Aorta (tissue), 5 donors: ENCODE measurements at regions of chr18 and their contacts with region 1.

Region 1: DNA sequence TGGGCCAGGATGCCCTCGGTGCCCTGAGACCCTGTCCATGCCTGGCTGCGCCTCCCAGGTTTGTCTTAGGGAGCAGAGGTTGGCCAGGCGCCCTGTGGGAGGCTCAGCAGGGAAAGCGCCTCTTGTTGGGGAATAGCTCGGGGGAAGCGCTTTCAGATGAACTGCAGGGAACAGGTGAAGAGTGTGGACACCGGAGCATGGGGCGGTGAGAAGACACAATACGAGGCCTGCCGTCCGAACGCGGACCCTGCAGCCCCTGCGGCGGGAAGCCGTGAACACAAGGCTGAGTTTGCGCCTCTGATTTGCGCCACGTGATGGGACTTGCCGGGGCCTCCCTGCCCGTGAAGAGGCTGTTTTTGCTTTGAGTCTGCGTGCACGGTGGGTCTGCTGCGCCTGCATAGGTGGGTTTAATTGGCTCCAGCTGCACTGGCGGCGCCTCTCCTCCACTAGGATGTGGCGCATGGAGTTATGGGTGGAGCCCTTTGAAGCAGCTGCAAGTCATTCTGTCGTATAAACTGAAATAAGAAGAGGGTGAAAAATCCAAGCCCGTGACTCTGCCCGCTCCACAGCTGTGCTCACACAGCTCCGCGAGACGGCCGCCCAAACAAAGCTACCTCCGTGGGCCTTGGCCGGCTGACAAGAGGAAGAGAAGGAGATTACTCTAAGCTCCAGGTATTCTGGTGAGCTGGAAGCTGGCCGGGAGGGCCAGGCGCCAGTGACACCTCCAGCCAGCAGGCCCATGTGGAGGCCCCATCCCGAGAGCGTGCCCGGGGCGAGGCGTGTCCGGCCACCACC is 103.5 kb upstream of the CTDP1 start:
- DNase-seq: peak; percentile 42 to 64
- ATAC-seq: no peak
- H3K4me3 ChIP-seq: no peak overlapping the region
- H3K27ac ChIP-seq: no peak overlapping the region
- H3K4me1 ChIP-seq: no peaks in the 10 kb centered on the region
- H3K27me3 ChIP-seq: no peaks in the 10 kb centered on the region

Region 2: GRCh38 chr18:79519751-79520477 is 56.2 kb before region 1 on chr18:
- intact Hi-C with region 1: loop called in 1 of 2 experiments (anchors 10 kb)
- DNase-seq: peak; percentile 48 to 70
- ATAC-seq: no peak
- H3K4me3 ChIP-seq: no peak overlapping the region
- H3K27ac ChIP-seq: no peak overlapping the region
- H3K4me1 ChIP-seq: no peaks in the 10 kb centered on the region
- H3K27me3 ChIP-seq: no peaks in the 10 kb centered on the region